ENCODE measurements at regions of chr14 and their contacts with region 1.

Region 1: DNA sequence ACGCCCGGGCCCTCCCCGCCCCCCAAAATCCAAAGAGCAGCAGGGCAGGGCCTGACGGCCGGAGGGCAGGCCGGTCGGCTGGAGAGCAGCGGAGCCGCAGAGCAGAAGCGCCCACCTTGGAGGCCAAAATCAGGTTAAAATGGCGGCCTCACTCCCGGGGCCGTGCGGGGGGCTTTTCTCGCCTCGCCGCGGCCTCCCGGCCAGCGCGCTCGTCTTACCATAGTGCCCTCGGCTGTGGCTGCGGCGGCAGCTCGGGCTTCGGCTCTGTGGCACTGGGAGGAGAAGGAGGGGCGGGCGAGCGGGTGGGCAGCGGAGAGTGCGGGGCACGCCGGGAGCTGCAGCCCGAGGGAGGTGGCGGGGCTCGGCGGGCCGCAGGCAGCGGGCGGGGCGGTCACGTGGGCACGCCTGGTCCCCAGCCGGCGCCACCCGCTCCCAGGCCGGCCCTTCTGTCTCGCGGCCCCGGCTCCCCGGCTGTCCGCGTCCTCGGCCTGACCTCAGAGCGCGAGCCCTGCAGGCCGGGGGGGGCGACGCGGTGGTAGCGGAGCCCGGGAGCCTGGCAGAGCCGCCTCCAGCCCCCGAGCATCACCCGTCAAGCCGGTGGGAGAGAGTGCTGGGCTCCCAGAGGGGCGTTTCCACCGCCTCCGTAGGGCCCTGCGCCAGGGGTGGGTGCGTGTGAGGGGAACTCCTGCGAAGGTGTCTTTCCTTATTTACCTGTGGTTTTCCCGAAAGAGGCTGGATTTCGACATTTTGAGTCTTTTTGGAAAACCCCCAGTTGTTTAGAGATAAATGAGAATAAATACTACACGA is at the start of gene CFL2:
- DNase-seq: peak; percentile 79
- ATAC-seq: peak; percentile 84
- H3K4me3 Mint-ChIP-seq: peak within 1 kb of the TSS; percentile 91
- H3K27ac Mint-ChIP-seq: peak within 1 kb of the TSS; percentile 91
- H3K4me1 Mint-ChIP-seq: peaks cover 21% of the 10 kb centered on the region
- H3K27me3 Mint-ChIP-seq: no peaks in the 10 kb centered on the region
- total RNA-seq, gene CFL2: 4.5 to 6.8 TPM

Region 2: DNA sequence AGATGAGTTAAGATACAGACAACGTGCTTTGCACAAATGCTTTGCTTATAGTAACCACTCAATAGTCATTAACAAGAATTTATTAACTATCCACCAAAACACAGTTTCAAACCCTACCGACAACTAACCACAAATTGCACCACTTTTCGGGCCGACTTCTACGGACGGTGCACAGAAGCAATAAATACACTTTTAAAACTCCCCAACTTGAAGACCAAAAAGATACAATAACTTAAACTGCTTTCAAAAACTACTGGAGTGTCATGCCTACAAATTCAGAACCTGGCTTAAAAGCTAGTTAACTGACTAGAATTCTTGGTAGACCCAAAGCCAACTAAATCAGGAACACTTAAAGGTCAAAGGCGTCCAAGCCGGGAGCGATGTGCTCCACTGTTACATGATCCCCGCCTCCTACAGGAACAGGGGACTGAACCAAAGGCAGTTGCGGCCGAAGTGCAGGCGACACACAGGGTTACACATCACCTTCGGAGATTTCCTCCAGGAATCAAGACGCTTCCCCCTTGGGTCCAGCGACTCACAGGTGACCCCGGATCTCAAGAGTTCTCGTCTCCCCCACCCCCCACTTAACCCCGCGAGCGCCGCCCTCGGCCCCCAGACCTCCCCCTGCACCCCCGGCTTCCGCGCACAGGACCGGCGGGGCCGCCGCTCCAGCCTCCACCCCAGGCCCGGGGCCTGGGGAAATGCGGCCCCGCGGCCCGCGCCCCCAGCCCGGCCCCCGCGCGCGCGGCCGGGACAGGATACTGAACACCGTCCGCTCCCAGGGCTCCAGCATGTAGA is 253.0 kb before region 1 on chr14:
- CTCF ChIA-PET with region 1: no interaction called
- POLR2A ChIA-PET with region 1: no interaction called
- intact Hi-C with region 1: loop called in 1 of 2 experiments (anchors 5 kb)
- DNase-seq: peak; percentile 50
- ATAC-seq: peak; percentile 62
- H3K4me3 Mint-ChIP-seq: peak overlapping the region; percentile 91
- H3K27ac Mint-ChIP-seq: peak overlapping the region; percentile 85
- H3K4me1 Mint-ChIP-seq: peaks cover 19% of the 10 kb centered on the region
- H3K27me3 Mint-ChIP-seq: no peaks in the 10 kb centered on the region

Region 3: GRCh38 chr14:34568803-34569202 is 145.7 kb before region 1 on chr14:
- CTCF ChIA-PET with region 1: no interaction called
- POLR2A ChIA-PET with region 1: no interaction called
- intact Hi-C with region 1: loop called in 1 of 2 experiments (anchors 5 kb)
- DNase-seq: no peak
- ATAC-seq: no peak
- H3K4me3 Mint-ChIP-seq: no peak overlapping the region
- H3K27ac Mint-ChIP-seq: no peak overlapping the region
- H3K4me1 Mint-ChIP-seq: no peaks in the 10 kb centered on the region
- H3K27me3 Mint-ChIP-seq: no peaks in the 10 kb centered on the region

Region 4: DNA sequence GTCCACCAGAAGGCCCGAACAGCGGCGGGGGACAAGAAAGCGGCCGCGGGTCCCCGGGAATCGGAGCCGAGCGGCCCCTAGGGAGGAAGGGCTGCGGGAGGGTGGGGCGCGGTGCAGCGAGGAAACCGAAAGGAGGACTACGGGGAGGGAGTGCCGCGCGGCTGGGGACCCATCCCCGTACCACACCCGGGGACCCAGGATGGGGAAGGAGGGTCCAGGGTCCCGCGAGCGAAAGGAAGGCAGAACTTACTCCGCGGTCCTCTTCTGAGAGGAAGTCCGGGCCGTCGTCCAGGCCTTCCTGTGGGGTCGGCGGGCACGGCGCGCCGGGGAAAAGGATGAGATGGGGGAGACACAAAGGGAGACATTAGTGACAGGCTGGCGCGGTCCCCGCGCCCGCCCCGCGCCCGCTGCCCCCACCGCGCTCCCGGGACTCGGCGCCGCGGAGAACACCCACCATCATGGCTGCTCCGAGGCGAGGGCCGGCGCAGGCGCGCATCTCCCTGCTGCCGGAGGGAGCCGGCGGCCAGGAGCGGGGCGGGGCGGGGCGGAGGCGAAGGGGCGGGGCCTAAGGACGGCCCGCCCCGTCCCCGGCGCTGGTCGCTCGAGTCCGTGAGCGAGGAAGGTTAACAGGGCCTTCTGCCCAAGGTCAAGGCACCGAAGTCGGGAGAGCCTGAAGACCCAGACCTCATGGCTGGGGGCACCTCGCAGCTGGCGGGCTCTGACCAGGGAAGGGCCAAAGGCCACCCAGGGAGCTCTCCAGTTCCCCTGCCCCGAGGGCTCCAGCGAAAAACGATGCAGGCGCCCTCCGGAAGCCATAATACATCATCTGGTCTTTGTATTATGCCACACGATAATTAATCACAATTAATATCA is 84.6 kb before region 1 on chr14 and contains the start of gene SNX6:
- CTCF ChIA-PET with region 1: no interaction called
- POLR2A ChIA-PET with region 1: interaction called, 5 read pairs
- intact Hi-C with region 1: loop called (anchors 1 to 5 kb)
- DNase-seq: peak; percentile 93
- ATAC-seq: peak; percentile 98
- H3K4me3 Mint-ChIP-seq: peak within 1 kb of the TSS; percentile 97
- H3K27ac Mint-ChIP-seq: peak within 1 kb of the TSS; percentile 98
- H3K4me1 Mint-ChIP-seq: peaks cover 25% of the 10 kb centered on the region
- H3K27me3 Mint-ChIP-seq: no peaks in the 10 kb centered on the region
- total RNA-seq, gene SNX6: 77.3 to 78.7 TPM

Region 5: GRCh38 chr14:34650421-34651216 is 63.9 kb before region 1 on chr14:
- CTCF ChIA-PET with region 1: no interaction called
- POLR2A ChIA-PET with region 1: no interaction called
- intact Hi-C with region 1: no loop called
- DNase-seq: no peak
- ATAC-seq: no peak
- H3K4me3 Mint-ChIP-seq: no peak overlapping the region
- H3K27ac Mint-ChIP-seq: no peak overlapping the region
- H3K4me1 Mint-ChIP-seq: no peaks in the 10 kb centered on the region
- H3K27me3 Mint-ChIP-seq: no peaks in the 10 kb centered on the region

Region 6: GRCh38 chr14:34668111-34668510 is 46.4 kb before region 1 on chr14:
- CTCF ChIA-PET with region 1: interaction called, 21 read pairs
- POLR2A ChIA-PET with region 1: no interaction called
- intact Hi-C with region 1: no loop called
- DNase-seq: no peak
- ATAC-seq: no peak
- H3K4me3 Mint-ChIP-seq: no peak overlapping the region
- H3K27ac Mint-ChIP-seq: no peak overlapping the region
- H3K4me1 Mint-ChIP-seq: peaks cover 6% of the 10 kb centered on the region
- H3K27me3 Mint-ChIP-seq: no peaks in the 10 kb centered on the region

Region 7: DNA sequence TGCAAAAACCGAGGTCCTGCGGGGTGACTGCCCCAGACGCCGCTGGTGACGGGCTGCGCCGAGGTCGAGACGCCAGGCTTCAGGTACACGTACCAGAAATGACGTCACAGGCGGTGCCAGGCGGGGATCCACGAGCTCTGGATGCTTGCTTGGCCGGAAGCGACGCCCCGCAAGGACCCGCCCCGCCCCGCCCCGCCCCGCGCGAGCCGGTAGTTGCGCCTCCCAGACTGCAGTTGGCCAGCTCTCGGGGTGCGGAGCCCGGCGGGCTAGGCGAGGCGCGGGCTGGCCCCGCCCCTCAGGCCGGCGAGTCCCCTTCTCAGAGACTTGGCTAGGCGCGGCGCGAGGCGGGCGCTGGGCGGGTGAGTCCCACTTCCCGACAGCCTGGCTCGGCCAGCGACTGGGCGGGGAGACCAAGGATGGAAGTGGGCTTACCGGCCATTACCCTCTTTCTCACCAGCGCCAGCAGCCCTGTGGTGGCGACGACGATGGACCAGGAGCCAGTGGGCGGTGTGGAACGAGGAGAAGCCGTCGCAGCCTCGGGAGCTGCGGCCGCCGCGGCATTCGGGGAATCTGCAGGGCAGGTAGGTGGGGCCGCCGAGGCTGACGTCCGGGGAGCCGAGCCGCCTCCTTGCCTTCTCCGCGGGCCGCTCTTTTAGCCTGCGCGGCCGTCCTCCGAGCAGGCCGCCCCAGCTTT is 331.7 kb after region 1 on chr14 and contains the start of gene FAM177A1:
- CTCF ChIA-PET with region 1: no interaction called
- POLR2A ChIA-PET with region 1: no interaction called
- intact Hi-C with region 1: loop called in 1 of 2 experiments (anchors 1 kb)
- DNase-seq: peak; percentile 100
- ATAC-seq: peak; percentile 94
- H3K4me3 Mint-ChIP-seq: peak within 1 kb of the TSS; percentile 95
- H3K27ac Mint-ChIP-seq: peak within 1 kb of the TSS; percentile 99
- H3K4me1 Mint-ChIP-seq: peaks cover 23% of the 10 kb centered on the region
- H3K27me3 Mint-ChIP-seq: no peaks in the 10 kb centered on the region
- total RNA-seq, gene FAM177A1: 35.4 to 37.2 TPM

Measured in activated CD4-positive, alpha-beta T cell treated with anti-CD3 and anti-CD28 coated beads for 36 hours (primary cell).